ENCODE measurements at regions of chr6 and their contacts with region 1.

Region 1: DNA sequence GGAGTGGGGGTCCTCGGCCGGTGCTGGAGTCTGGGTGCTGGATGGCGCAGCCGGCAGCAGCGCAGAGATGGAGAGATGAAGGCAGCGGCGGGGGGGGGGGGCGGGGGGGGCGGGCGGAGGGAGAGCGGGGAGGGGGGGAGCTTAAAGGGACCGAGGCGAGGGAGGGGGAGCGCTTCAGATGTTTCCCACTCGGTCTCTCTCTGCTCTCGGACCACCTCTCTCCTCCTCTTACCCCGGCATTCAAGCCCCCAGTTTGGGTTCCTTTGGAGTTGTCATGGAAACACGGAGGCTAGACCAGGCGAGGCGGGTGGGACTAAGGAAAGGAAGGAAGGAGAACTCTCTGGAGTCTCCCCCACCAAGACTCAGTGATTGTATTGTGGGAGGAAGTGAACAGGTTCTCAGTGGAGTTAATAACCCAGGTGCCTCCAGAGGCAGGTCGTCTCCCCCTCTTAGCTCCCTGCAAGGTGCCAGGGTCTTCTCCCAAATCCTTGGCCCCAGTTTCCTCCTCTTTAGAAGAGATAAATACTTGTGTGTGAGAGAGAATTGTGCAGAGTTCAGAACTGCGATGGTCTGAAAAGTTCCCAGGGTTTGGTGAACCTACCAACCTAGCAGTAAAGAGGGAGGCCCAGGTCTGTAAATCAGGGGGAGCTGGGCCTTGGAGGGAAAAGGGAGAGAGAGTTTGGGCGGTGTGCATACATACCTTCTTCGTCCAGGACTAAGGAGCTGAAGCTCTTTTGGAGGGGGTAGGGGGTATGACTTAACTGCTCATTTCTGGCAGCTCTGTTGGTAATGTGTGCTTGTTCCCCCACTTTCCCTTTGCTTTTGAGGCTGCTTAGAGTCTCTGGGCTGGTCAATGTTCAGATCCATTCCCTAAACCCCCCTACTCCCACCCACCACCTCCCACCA is at the start of gene PRRT1:
- DNase-seq: peak in 3 of 35 experiments; percentile 11 to 27 (median 14)
- ATAC-seq: no peak
- H3K4me3 ChIP-seq: peak within 1 kb of the TSS in 1 of 2 donors; percentile 26
- H3K4me3 Mint-ChIP-seq: peak within 1 kb of the TSS; percentile 72 to 97 (median 91)
- H3K27ac ChIP-seq: no peak within 1 kb of the TSS
- H3K27ac Mint-ChIP-seq: peak within 1 kb of the TSS; percentile 70 to 71
- H3K4me1 ChIP-seq: peaks cover 6 to 76% of the 10 kb centered on the region in 2 experiments
- H3K4me1 Mint-ChIP-seq: peaks cover 61 to 74% (median 72%) of the 10 kb centered on the region in 3 donors
- H3K27me3 ChIP-seq: peaks cover 3 to 49% of the 10 kb centered on the region in 2 experiments
- H3K27me3 Mint-ChIP-seq: peaks cover 6 to 36% of the 10 kb centered on the region in 2 donors
- total RNA-seq, gene PRRT1: 1.7 to 3.3 (median 2.3) TPM

Region 2: DNA sequence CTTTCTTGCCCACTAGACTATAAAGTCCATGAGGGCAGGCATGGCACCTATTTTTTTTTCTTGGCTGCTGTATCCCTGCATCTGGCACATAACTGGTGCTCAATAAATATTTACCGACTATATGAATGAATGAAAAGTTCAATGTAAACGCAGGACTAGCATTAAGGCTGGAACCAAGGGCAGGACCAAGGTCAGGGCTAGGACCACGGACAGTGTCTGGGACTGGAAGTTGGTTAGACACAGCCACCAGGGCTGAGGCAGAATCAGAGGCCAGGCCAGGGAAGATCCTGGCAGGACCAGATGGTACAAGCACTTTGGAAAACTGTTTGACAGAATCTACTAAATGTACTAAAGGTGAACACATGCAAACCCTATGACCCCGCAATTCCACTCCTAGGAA is 46.7 kb before region 1 on chr6:
- CTCF ChIA-PET with region 1: no interaction called
- POLR2A ChIA-PET with region 1: interaction called in 1 of 2 experiments, 15 read pairs
- DNase-seq: no peak
- ATAC-seq: no peak
- H3K4me3 ChIP-seq: no peak overlapping the region
- H3K4me3 Mint-ChIP-seq: no peak overlapping the region
- H3K27ac ChIP-seq: no peak overlapping the region
- H3K27ac Mint-ChIP-seq: no peak overlapping the region
- H3K4me1 ChIP-seq: peaks cover 0 to 28% of the 10 kb centered on the region in 2 experiments
- H3K4me1 Mint-ChIP-seq: peaks cover 24 to 34% (median 26%) of the 10 kb centered on the region in 3 donors
- H3K27me3 ChIP-seq: peaks cover 2 to 43% of the 10 kb centered on the region in 2 experiments
- H3K27me3 Mint-ChIP-seq: peaks cover 17 to 34% of the 10 kb centered on the region in 2 donors

Measured in T-cell (primary cell).